CD4-positive, alpha-beta T cell (primary cell): ENCODE measurements at regions of chr12 and their contacts with region 1.

Region 1: GRCh38 chr12:6937481-6938297 is 5.9 kb upstream of the RNU7-1 start:
- DNase-seq: peak; percentile 86 to 99 (median 92)
- ATAC-seq: peak; percentile 91
- H3K4me3 ChIP-seq: peak overlapping the region; percentile 72
- H3K4me3 Mint-ChIP-seq: peak overlapping the region; percentile 90
- H3K27ac ChIP-seq: peak overlapping the region; percentile 89 to 92
- H3K27ac Mint-ChIP-seq: peak overlapping the region; percentile 95
- H3K4me1 ChIP-seq: peaks cover 47% of the 10 kb centered on the region
- H3K4me1 Mint-ChIP-seq: peaks cover 61% of the 10 kb centered on the region
- H3K27me3 ChIP-seq: no peaks in the 10 kb centered on the region
- H3K27me3 Mint-ChIP-seq: no peaks in the 10 kb centered on the region
- CTCF ChIP-seq: peak; percentile 89

Region 2: DNA sequence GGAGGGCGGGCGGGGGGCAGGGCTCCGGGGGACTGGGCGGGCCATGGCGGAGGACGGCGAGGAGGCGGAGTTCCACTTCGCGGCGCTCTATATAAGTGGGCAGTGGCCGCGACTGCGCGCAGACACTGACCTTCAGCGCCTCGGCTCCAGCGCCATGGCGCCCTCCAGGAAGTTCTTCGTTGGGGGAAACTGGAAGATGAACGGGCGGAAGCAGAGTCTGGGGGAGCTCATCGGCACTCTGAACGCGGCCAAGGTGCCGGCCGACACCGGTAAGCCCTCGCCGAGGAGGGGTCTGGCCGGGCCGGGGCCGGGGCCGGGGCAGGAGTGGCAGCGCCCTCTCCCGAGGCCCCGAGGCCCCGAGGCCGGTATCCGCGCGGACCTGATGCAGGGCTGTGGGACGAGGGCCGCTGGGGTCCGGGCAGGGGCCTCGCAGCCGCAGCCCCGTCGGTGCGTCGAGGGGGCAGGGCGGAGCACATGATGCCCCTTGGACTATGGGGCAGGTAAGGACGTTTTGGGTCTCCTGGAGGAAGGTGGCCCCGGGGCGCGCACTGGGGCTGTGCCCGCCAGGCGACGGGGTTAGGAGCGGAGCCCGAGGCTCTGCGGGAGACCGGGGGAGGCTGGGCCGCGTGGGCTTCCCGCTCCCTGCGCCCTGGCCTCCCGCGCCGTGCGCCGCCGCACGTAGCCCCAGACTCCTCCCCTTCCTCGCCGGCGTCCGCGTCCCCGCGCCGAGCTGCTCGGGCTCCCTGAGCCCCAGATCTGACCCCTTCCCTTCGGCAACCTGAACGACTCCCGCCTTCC is 70.1 kb before region 1 on chr12 and contains the start of gene TPI1:
- CTCF ChIA-PET with region 1: interaction called, 33 read pairs
- POLR2A ChIA-PET with region 1: interaction called, 74 read pairs
- intact Hi-C with region 1: loop called in 1 of 2 experiments (anchors 5 kb)
- DNase-seq: peak; percentile 55 to 88 (median 72)
- ATAC-seq: peak; percentile 64
- H3K4me3 ChIP-seq: peak within 1 kb of the TSS; percentile 68
- H3K4me3 Mint-ChIP-seq: peak within 1 kb of the TSS; percentile 94
- H3K27ac ChIP-seq: peak within 1 kb of the TSS; percentile 73 to 78
- H3K27ac Mint-ChIP-seq: peak within 1 kb of the TSS; percentile 80
- H3K4me1 ChIP-seq: peaks cover 53% of the 10 kb centered on the region
- H3K4me1 Mint-ChIP-seq: peaks cover 56% of the 10 kb centered on the region
- H3K27me3 ChIP-seq: no peaks in the 10 kb centered on the region
- H3K27me3 Mint-ChIP-seq: no peaks in the 10 kb centered on the region
- CTCF ChIP-seq: no peak
- total RNA-seq, gene TPI1: 46.8 to 48.7 TPM

Region 3: DNA sequence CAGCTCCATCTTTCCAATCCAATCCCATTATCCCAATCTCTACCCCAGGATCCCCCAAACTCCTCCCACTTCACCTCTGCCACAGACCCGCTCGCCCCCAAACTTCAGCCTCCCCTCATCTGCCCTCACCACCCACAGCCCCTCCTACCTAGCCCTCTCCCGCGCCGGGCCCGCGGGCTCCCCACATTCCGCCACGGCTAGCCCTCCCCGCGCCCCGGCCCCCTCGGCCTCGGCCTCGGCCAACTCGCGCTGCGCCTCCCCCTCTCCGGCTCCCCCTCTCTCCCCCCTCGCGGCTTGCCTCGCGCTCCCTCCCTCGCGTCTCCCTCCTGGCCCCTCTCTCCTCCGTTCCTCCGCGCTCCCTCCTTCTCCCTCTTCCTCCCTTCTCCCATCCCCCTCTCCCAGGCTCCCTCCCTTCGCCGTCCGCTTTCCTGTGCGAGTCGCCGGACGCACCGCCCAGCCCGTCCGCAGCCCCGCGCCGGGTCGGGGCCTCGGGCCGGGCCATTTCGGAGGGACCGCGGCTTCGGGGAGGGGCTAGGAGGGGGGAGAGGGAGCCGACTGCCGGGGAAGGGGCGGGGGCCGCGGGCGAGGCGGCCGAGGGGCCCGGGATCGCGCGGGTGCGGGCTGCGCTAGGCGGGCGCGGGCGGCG is 10.2 kb before region 1 on chr12 and contains the start of gene ATN1:
- CTCF ChIA-PET with region 1: interaction called, 26 read pairs
- POLR2A ChIA-PET with region 1: interaction called, 76 read pairs
- intact Hi-C with region 1: loop called in 1 of 2 experiments (anchors 2 kb)
- DNase-seq: peak in 7 of 14 experiments; percentile 33 to 69 (median 54)
- ATAC-seq: peak; percentile 41
- H3K4me3 ChIP-seq: peak within 1 kb of the TSS; percentile 65
- H3K4me3 Mint-ChIP-seq: peak within 1 kb of the TSS; percentile 95
- H3K27ac ChIP-seq: peak within 1 kb of the TSS; percentile 79 to 82
- H3K27ac Mint-ChIP-seq: peak within 1 kb of the TSS; percentile 87
- H3K4me1 ChIP-seq: peaks cover 49% of the 10 kb centered on the region
- H3K4me1 Mint-ChIP-seq: peaks cover 56% of the 10 kb centered on the region
- H3K27me3 ChIP-seq: no peaks in the 10 kb centered on the region
- H3K27me3 Mint-ChIP-seq: no peaks in the 10 kb centered on the region
- CTCF ChIP-seq: no peak
- total RNA-seq, gene ATN1: 28.7 to 29.6 TPM

Region 4: GRCh38 chr12:6959058-6959804 is 21.5 kb after region 1 on chr12:
- CTCF ChIA-PET with region 1: interaction called, 324 read pairs
- POLR2A ChIA-PET with region 1: interaction called, 963 read pairs
- intact Hi-C with region 1: no loop called
- DNase-seq: peak; percentile 57 to 93 (median 69)
- ATAC-seq: peak; percentile 60
- H3K4me3 ChIP-seq: peak overlapping the region; percentile 50
- H3K4me3 Mint-ChIP-seq: peak overlapping the region; percentile 92
- H3K27ac ChIP-seq: peak overlapping the region; percentile 90 to 96
- H3K27ac Mint-ChIP-seq: peak overlapping the region; percentile 97
- H3K4me1 ChIP-seq: peaks cover 98% of the 10 kb centered on the region
- H3K4me1 Mint-ChIP-seq: peaks cover 81% of the 10 kb centered on the region
- H3K27me3 ChIP-seq: no peaks in the 10 kb centered on the region
- H3K27me3 Mint-ChIP-seq: no peaks in the 10 kb centered on the region
- CTCF ChIP-seq: no peak

Region 5: GRCh38 chr12:7108796-7109571 is 171.3 kb after region 1 on chr12 and contains the start of gene C1RL:
- CTCF ChIA-PET with region 1: interaction called, 3 read pairs
- POLR2A ChIA-PET with region 1: interaction called, 24 read pairs
- intact Hi-C with region 1: no loop called
- DNase-seq: peak; percentile 55 to 85 (median 76)
- ATAC-seq: peak; percentile 48
- H3K4me3 ChIP-seq: peak within 1 kb of the TSS; percentile 70
- H3K4me3 Mint-ChIP-seq: peak within 1 kb of the TSS; percentile 93
- H3K27ac ChIP-seq: peak within 1 kb of the TSS; percentile 79 to 80
- H3K27ac Mint-ChIP-seq: peak within 1 kb of the TSS; percentile 93
- H3K4me1 ChIP-seq: peaks cover 43% of the 10 kb centered on the region
- H3K4me1 Mint-ChIP-seq: peaks cover 46% of the 10 kb centered on the region
- H3K27me3 ChIP-seq: no peaks in the 10 kb centered on the region
- H3K27me3 Mint-ChIP-seq: no peaks in the 10 kb centered on the region
- CTCF ChIP-seq: peak; percentile 95
- total RNA-seq, gene C1RL: 12.2 to 14.1 TPM